GM10248 (cell line): ENCODE measurements at regions of chr6 and their contacts with region 1.

Region 1: GRCh38 chr6:82040405-82041221 is 206.9 kb downstream of the IBTK start:
- DNase-seq: peak; percentile 8
- CTCF ChIP-seq: peak; percentile 82

Region 2: DNA sequence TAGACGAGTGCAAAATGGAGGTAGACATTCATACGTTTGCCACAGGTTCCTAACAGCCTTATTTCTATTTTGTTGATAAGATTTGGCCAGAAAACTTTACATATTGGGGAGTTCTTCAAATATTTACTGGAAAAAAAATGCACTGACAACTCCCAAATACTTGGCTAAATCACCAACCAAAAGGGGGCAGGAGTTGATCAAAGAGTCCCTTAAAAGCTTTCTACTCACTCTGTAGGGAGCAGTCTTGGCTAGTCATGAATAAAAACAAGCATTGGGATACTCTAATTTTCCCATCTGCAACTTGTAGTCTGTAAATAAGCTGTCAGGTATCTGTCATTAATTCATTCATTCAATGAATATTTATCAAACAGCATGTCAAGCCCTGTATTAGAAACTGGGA is 306.5 kb before region 1 on chr6:
- CTCF ChIA-PET with region 1: interaction called, 10 read pairs
- POLR2A ChIA-PET with region 1: no interaction called
- DNase-seq: no peak
- CTCF ChIP-seq: no peak

Region 3: GRCh38 chr6:82017288-82017687 is 23.3 kb before region 1 on chr6:
- CTCF ChIA-PET with region 1: interaction called, 10 read pairs
- POLR2A ChIA-PET with region 1: no interaction called
- DNase-seq: no peak
- CTCF ChIP-seq: no peak

Region 4: DNA sequence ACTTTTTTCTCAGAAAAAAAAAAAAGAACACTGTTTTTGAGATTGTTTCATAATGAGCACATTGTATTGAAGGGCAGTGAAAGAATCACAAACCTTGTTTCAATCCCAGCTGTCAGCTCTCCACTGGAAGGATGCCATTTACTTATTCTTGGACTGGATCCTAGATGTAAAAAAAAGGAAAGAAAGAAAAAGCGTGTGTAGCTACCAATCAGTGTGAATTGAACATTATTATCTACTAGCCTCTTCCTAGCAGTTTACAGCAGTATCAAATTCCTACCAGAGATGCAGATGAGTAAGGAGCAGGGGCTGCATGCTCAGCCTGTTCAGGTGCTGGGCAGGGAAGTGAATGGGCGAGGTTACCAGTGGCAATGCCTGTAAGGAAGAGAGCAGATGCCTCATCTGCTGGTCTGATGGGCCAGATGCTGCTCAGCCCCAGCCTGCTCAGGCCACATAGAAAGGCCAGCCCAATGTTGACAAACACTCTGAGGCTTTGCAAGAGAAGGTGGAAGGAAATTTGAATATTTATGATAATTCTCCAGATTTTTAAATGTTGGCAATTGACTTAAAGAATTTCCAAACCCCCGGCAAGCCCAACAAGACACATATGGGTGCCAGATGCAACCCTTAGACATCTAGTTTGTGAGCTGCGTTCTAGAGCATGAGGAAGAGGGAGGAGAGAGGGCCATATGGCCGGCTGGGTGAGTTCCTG is 17.4 kb after region 1 on chr6:
- CTCF ChIA-PET with region 1: interaction called, 10 read pairs
- POLR2A ChIA-PET with region 1: no interaction called
- DNase-seq: no peak
- CTCF ChIP-seq: no peak